Tibial artery (tissue), 4 donors: ENCODE measurements at regions of chr2 and their contacts with region 1.

Region 1: GRCh38 chr2:85538486-85539360 is at the start of gene MAT2A:
- DNase-seq: peak; percentile 93 to 96
- H3K4me3 ChIP-seq: peak within 1 kb of the TSS; percentile 69 to 94
- H3K27ac ChIP-seq: peak within 1 kb of the TSS; percentile 96 to 100
- H3K4me1 ChIP-seq: peaks cover 0 to 56% (median 39%) of the 10 kb centered on the region in 4 donors
- H3K27me3 ChIP-seq: no peaks in the 10 kb centered on the region
- CTCF ChIP-seq: peak; percentile 69 to 72

Region 2: DNA sequence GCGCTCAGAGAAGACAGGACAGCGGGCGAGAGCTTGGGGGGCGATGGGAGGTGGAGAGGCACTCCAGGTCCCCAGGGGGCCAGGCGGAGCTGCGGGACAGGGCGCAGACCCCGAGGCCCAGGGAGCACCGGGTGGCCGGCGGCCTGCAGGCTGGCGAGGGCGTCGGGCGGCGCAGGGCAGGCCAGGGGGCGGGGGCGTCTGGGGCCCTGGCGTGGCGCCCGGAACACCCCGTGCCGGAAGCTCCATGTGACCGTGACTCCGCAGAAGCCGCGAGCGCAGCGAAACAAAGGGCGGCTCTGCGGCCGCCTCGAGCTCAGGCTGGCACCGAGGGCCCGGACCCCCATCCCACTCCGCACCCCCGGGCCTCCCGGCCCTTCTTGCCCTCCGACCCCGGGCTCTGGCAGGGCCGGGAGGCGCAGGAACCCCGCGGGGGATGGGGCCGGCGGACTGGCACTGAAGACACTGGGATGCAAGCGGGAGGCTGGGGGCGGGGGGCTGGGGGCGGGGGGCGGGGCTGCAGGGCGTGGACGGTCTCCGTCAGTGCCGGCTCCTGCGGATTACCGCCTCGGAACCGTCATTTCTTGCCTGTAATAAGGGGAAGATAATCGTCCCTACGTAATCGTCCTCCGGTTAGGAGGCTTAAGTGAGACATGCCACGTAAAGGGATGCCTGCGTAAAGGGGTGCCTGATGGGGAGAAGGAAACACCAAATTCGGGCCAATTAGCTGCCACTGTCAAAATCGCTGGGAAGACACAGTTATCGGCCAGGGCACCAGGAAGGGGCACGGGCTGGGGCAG is 101.0 kb before region 1 on chr2:
- intact Hi-C with region 1: loop called (anchors 5 kb)
- DNase-seq: peak; percentile 81 to 95
- H3K4me3 ChIP-seq: peak overlapping the region; percentile 56 to 66
- H3K27ac ChIP-seq: peak overlapping the region; percentile 94 to 97
- H3K4me1 ChIP-seq: peaks cover 0 to 45% (median 36%) of the 10 kb centered on the region in 4 donors
- H3K27me3 ChIP-seq: no peaks in the 10 kb centered on the region
- CTCF ChIP-seq: no peak